Heart left ventricle (tissue), 16 donors: ENCODE measurements at regions of chrX and their contacts with region 1.

Region 1: GRCh38 chrX:80808160-80808735 is 1.4 kb downstream of the BRWD3 start:
- DNase-seq: peak; percentile 71 to 80 (median 75)
- ATAC-seq: peak; percentile 78 to 82 (median 80)
- H3K4me3 ChIP-seq: peak overlapping the region; percentile 32 to 89 (median 66)
- H3K27ac ChIP-seq: peak overlapping the region; percentile 71 to 88 (median 82)
- H3K4me1 ChIP-seq: peaks cover 0 to 11% (median 0%) of the 10 kb centered on the region in 12 donors
- H3K27me3 ChIP-seq: no peaks in the 10 kb centered on the region
- CTCF ChIP-seq: no peak
- POLR2A ChIP-seq: no peak

Region 2: DNA sequence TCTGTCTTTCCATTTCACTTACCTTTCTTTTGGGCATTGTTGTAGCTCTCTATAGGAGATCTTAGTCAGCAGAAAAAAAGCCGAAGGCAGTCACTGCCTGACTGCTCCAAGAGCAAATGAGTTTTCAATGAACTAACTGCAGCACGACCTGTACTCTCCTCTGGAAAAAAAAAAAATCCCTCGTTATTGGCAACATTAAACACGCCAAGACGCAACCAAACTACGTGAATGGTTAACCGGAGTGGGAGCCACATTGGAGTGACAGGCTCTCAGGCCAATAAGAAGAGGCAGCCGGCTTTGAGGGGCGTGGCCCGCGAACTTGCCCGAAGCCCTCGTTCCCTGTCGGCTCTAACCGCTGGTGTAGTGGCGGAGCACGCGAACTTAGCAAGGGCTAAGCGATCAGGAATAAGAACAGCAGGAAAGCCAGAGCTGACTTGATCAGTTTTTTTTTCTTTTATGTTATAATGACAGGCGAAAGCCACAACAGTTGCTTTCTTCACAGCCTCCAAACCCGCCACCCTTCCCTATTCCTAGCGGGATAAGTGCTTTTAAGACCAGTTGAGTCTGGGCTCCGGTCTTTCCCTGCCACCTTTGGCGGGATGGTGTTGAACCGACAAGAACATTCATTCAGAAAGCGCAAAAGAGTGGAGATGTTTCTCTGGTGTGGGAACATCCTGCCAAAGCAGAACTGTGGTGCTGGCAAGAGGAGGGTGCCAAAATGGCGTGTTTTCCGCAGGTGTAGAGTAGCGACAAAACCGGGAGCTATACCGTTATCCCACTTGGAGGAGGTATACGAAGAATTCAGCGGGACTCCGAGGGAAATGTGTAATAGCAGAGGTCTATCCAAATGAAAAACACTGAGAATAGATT is 313.5 kb after region 1 on chrX:
- intact Hi-C with region 1: loop called in 2 of 10 experiments (anchors 2 to 10 kb)
- DNase-seq: peak; percentile 86 to 91 (median 89)
- ATAC-seq: peak; percentile 98 to 100 (median 100)
- H3K4me3 ChIP-seq: peak overlapping the region; percentile 23 to 73 (median 54)
- H3K27ac ChIP-seq: peak overlapping the region in 9 of 12 donors; percentile 7 to 66 (median 38)
- H3K4me1 ChIP-seq: peaks cover 0 to 7% (median 0%) of the 10 kb centered on the region in 12 donors
- H3K27me3 ChIP-seq: peaks cover 0 to 22% (median 0%) of the 10 kb centered on the region in 9 donors
- CTCF ChIP-seq: no peak
- POLR2A ChIP-seq: no peak